ENCODE measurements at regions of chr10 and their contacts with region 1.

Region 1: DNA sequence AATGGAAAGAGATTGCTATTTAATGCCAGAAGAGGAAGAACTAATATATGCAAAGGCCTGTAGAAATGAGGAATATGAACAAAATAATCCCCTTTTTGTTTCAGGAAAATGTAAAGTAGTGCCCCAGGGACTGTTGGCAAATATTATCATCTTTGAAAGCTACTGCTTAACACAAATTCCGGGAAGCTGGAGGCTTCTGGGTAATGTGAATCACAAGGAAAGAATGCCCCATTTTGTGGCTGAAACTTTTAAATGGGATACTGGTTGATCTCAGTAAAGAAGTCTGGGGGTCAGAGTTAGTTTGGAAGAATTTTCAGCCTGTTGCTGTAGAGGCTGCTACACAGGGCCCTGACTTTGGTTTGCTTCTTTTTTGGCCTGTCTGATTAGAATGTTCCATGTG is 141.0 kb downstream of the PTEN start:
- DNase-seq: no peak
- ATAC-seq: no peak
- H3K4me3 ChIP-seq: no peak overlapping the region
- H3K4me3 Mint-ChIP-seq: no peak overlapping the region
- H3K27ac ChIP-seq: no peak overlapping the region
- H3K27ac Mint-ChIP-seq: no peak overlapping the region
- H3K4me1 ChIP-seq: no peaks in the 10 kb centered on the region
- H3K4me1 Mint-ChIP-seq: no peaks in the 10 kb centered on the region
- H3K27me3 ChIP-seq: no peaks in the 10 kb centered on the region
- H3K27me3 Mint-ChIP-seq: no peaks in the 10 kb centered on the region
- CTCF ChIP-seq: no peak

Region 2: DNA sequence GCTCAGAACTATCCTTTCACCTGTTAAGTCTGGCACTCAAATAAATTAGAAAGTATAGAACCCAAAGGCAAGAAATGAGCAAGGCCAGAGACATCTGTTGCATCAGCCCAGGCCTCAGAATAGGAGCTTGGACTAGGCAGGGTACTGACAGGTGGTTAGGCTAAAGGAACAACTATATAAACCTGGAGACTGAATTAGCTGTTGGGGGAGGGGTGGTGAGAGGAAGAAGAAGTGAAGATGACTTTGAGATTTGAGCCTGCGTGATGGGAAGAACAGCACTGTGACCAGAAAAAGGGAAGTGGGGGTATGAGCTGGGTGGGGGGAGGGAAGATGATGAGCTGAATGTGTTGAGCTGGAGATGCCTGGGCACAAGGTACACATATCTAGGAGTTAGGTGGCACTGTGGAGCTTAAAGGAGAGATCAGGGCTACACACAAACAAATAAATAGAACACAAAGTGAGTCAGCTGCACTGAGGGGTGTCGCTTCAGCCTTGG is 103.7 kb after region 1 on chr10:
- CTCF ChIA-PET with region 1: no interaction called
- POLR2A ChIA-PET with region 1: no interaction called
- intact Hi-C with region 1: loop called in 1 of 2 experiments (anchors 5 kb)
- DNase-seq: peak in 2 of 9 experiments; percentile 23 to 49
- ATAC-seq: no peak
- H3K4me3 ChIP-seq: no peak overlapping the region
- H3K4me3 Mint-ChIP-seq: no peak overlapping the region
- H3K27ac ChIP-seq: no peak overlapping the region
- H3K27ac Mint-ChIP-seq: no peak overlapping the region
- H3K4me1 ChIP-seq: no peaks in the 10 kb centered on the region
- H3K4me1 Mint-ChIP-seq: peaks cover 10% of the 10 kb centered on the region
- H3K27me3 ChIP-seq: no peaks in the 10 kb centered on the region
- H3K27me3 Mint-ChIP-seq: no peaks in the 10 kb centered on the region
- CTCF ChIP-seq: no peak

Measured in CD8-positive, alpha-beta T cell (primary cell).